Mucosa of descending colon (tissue), 3 donors: ENCODE measurements at regions of chr13 and their contacts with region 1.

Region 1: DNA sequence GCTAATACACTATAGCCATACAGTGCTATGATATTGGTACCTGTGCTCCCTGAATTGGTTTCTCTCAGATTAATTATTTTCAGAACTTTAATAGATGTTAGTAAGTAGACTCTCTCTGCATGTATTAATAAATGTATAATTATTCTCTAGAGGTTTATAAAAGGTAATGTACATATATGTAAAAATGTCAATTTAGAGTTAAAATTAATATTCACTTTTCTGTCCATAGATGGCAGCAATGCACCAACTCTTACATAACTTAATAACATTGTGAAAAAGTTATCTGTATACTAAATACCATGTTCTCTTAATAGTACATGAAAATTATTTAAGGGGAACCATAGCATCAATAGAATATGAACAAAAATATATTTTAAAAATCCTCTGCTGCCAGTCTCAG is 515.0 kb upstream of the KLHL1 start:
- DNase-seq: no peak
- ATAC-seq: no peak
- H3K4me3 ChIP-seq: no peak overlapping the region
- H3K4me1 ChIP-seq: no peaks in the 10 kb centered on the region
- CTCF ChIP-seq: no peak

Region 2: DNA sequence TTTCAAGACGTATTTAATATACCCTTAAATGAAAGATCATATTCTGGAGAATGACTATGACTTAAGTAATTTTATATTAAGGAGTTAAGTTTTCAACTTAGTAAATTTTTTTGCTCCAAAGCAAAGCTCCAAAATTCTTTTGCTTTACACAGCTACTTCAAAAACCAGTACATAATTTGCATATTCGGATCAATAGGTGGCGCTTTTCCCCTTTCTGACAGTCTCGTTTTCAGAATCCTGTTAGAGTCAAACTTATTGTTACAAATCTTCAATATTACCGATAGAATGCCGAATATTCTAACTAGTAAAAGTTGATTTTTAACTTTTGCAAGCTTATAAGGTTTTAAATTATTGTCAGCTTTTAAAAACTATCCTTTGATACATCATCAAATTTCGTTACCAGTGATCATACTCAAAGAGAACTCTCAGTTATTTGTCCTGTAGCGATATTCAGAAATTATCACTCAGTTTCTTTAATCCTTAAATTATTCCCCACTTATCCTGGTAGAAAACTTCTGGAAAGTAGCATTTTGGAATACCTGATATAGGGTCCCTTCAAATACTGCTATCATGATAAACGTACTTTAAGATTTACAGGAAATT is 337.7 kb after region 1 on chr13:
- intact Hi-C with region 1: loop called in 1 of 2 experiments (anchors 10 kb)
- DNase-seq: peak in 1 of 3 donors; percentile 35
- ATAC-seq: no peak
- H3K4me3 ChIP-seq: no peak overlapping the region
- H3K4me1 ChIP-seq: no peaks in the 10 kb centered on the region
- CTCF ChIP-seq: peak; percentile 27